GM12878 (cell line): ENCODE measurements at regions of chr16 and their contacts with region 1.

Region 1: DNA sequence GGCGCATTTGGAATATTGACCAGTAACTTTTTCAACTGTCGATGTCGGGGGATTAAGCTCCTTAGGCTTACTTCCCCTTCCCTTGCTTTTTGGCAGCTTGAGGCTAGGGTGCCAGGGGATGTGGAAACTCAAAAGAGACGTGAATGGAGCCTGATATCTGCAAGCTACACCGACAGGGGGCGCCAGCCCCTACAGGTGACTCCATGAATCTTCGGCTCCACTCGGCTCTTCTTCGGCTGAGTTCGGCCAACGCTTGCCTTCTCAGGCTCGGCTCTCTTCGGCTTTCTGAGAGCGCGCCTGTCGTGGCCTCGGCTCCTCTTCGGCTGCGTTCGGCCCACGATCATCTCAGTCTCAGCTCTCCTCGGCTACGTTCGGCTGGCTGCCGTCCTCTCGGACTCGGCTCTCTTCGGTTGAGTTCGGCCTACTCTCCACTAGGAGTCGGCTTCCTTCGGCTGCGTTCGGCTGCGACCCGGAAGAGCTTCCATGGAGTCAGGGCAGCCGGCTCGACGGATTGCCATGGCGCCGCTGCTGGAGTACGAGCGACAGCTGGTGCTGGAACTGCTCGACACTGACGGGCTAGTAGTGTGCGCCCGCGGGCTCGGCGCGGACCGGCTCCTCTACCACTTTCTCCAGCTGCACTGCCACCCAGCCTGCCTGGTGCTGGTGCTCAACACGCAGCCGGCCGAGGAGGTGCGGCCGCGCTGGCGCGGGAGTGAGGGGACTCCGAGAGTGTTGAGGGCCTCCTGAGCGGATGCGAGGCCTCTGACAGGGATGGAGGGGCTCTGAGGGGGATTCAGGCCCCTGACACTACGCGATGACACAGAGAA is at the start of gene ERCC4:
- DNase-seq: peak; percentile 96
- ATAC-seq: peak; percentile 99
- H3K4me3 ChIP-seq: peak within 1 kb of the TSS; percentile 87
- H3K27ac ChIP-seq: peak within 1 kb of the TSS; percentile 54
- H3K4me1 ChIP-seq: no peaks in the 10 kb centered on the region
- H3K27me3 ChIP-seq: no peaks in the 10 kb centered on the region
- CTCF ChIP-seq: peak; percentile 89 to 97 (median 96)
- EP300 ChIP-seq: no peak
- POLR2A ChIP-seq: peak; percentile 97
- RAD21 ChIP-seq: peak; percentile 41; the same call in 1 of the 2 replicates
- polyA plus RNA-seq, gene ERCC4: 5.7 to 15.6 TPM

Region 2: GRCh38 chr16:13665876-13666275 is 254.0 kb before region 1 on chr16:
- CTCF ChIA-PET with region 1: no interaction called
- POLR2A ChIA-PET with region 1: no interaction called
- RAD21 ChIA-PET with region 1: no interaction called
- SMC1A ChIA-PET with region 1: no interaction called
- in situ Hi-C with region 1: no loop called
- intact Hi-C with region 1: no loop called
- DNase-seq: no peak
- ATAC-seq: no peak
- H3K4me3 ChIP-seq: no peak overlapping the region
- H3K27ac ChIP-seq: no peak overlapping the region
- H3K4me1 ChIP-seq: no peaks in the 10 kb centered on the region
- H3K27me3 ChIP-seq: no peaks in the 10 kb centered on the region
- CTCF ChIP-seq: no peak
- EP300 ChIP-seq: no peak
- POLR2A ChIP-seq: no peak
- RAD21 ChIP-seq: no peak

Region 3: GRCh38 chr16:13873835-13874438 is 46.0 kb before region 1 on chr16:
- CTCF ChIA-PET with region 1: interaction called, 10 read pairs
- POLR2A ChIA-PET with region 1: no interaction called
- RAD21 ChIA-PET with region 1: interaction called, 3 read pairs
- SMC1A ChIA-PET with region 1: interaction called, 4 read pairs
- in situ Hi-C with region 1: no loop called
- intact Hi-C with region 1: no loop called
- DNase-seq: no peak
- ATAC-seq: no peak
- H3K4me3 ChIP-seq: no peak overlapping the region
- H3K27ac ChIP-seq: no peak overlapping the region
- H3K4me1 ChIP-seq: no peaks in the 10 kb centered on the region
- H3K27me3 ChIP-seq: 0 out of 4 replicates have a peak, but pooled peaks cover 0 to 2% of the 10 kb centered on the region in 2 experiments
- CTCF ChIP-seq: peak; percentile 27 to 46 (median 32); a peak in 4 of 6 replicates
- EP300 ChIP-seq: no peak
- POLR2A ChIP-seq: no peak
- RAD21 ChIP-seq: peak; percentile 58

Region 4: GRCh38 chr16:13951611-13952010 is 31.7 kb after region 1 on chr16:
- CTCF ChIA-PET with region 1: interaction called, 17 read pairs
- POLR2A ChIA-PET with region 1: no interaction called
- RAD21 ChIA-PET with region 1: interaction called, 6 read pairs
- SMC1A ChIA-PET with region 1: interaction called, 8 read pairs
- in situ Hi-C with region 1: no loop called
- intact Hi-C with region 1: loop called (anchors 5 kb)
- DNase-seq: no peak
- ATAC-seq: no peak
- H3K4me3 ChIP-seq: no peak overlapping the region
- H3K27ac ChIP-seq: no peak overlapping the region
- H3K4me1 ChIP-seq: peaks cover 15% of the 10 kb centered on the region
- H3K27me3 ChIP-seq: no peaks in the 10 kb centered on the region
- CTCF ChIP-seq: no peak
- EP300 ChIP-seq: no peak
- POLR2A ChIP-seq: no peak
- RAD21 ChIP-seq: no peak

Region 5: GRCh38 chr16:14007450-14007849 is 87.6 kb after region 1 on chr16:
- CTCF ChIA-PET with region 1: interaction called, 8 read pairs
- POLR2A ChIA-PET with region 1: no interaction called
- RAD21 ChIA-PET with region 1: no interaction called
- SMC1A ChIA-PET with region 1: interaction called, 3 read pairs
- in situ Hi-C with region 1: no loop called
- intact Hi-C with region 1: loop called (anchors 5 kb)
- DNase-seq: peak; percentile 62
- ATAC-seq: peak; percentile 87
- H3K4me3 ChIP-seq: no peak overlapping the region
- H3K27ac ChIP-seq: no peak overlapping the region
- H3K4me1 ChIP-seq: peaks cover 14% of the 10 kb centered on the region
- H3K27me3 ChIP-seq: no peaks in the 10 kb centered on the region
- CTCF ChIP-seq: no peak
- EP300 ChIP-seq: no peak
- POLR2A ChIP-seq: no peak
- RAD21 ChIP-seq: no peak

Region 6: DNA sequence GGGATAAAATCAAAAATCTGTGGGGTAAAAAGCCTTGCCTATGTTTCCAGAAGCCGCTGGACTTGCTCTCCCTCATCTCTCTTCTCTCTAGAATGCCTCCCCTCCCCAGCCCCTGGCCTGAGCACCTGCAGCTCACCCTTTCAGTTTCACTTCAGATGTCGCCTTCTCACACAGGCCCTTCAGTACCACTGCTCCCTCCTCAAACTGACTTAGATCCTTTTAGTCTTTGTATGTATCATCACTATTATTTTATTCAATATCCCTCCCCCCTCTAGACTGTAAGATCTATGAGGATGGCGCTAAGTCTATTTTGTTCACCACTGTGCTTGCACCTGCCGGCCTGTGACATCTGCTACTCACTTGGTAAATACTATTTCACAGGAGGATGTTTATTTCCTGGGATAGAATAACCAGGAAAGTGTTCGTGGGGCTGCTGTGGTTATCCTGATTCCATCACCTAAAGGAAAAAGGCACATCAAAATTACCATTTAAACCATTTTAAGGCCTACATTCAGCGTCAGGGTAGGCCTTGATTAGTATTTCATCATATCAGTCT is 273.5 kb after region 1 on chr16:
- CTCF ChIA-PET with region 1: interaction called, 8 read pairs
- POLR2A ChIA-PET with region 1: no interaction called
- RAD21 ChIA-PET with region 1: interaction called, 6 read pairs
- SMC1A ChIA-PET with region 1: interaction called, 9 read pairs
- in situ Hi-C with region 1: no loop called
- intact Hi-C with region 1: loop called (anchors 5 kb)
- DNase-seq: peak; percentile 21
- ATAC-seq: peak; percentile 98
- H3K4me3 ChIP-seq: peak overlapping the region; percentile 16
- H3K27ac ChIP-seq: peak overlapping the region; percentile 74
- H3K4me1 ChIP-seq: peaks cover 19% of the 10 kb centered on the region
- H3K27me3 ChIP-seq: no peaks in the 10 kb centered on the region
- CTCF ChIP-seq: no peak
- EP300 ChIP-seq: no peak
- POLR2A ChIP-seq: peak; percentile 43; the same call in 1 of the 2 replicates
- RAD21 ChIP-seq: no peak

Region 7: DNA sequence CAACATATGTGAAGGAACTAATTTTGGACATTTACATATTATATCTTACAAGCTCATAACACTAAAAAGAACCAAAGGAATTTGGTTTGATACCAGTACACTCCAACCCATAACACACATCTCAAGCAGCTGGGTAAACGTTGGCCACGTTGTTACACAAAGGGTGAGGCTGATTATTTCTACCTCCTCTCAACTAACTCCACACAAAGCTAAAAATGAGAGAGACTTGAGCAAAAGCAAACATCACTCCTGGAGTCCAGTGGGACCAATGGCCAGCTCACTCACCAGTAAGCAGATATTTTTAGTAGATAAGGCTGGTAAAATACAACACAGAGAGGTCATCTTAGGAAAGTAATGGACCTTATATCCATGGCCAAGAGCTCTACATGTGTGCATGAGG is 358.9 kb after region 1 on chr16:
- CTCF ChIA-PET with region 1: interaction called, 31 read pairs
- POLR2A ChIA-PET with region 1: no interaction called
- RAD21 ChIA-PET with region 1: no interaction called
- SMC1A ChIA-PET with region 1: interaction called, 7 read pairs
- in situ Hi-C with region 1: no loop called
- intact Hi-C with region 1: no loop called
- DNase-seq: no peak
- ATAC-seq: no peak
- H3K4me3 ChIP-seq: no peak overlapping the region
- H3K27ac ChIP-seq: no peak overlapping the region
- H3K4me1 ChIP-seq: no peaks in the 10 kb centered on the region
- H3K27me3 ChIP-seq: no peaks in the 10 kb centered on the region
- CTCF ChIP-seq: no peak
- EP300 ChIP-seq: no peak
- POLR2A ChIP-seq: no peak
- RAD21 ChIP-seq: no peak

Region 8: DNA sequence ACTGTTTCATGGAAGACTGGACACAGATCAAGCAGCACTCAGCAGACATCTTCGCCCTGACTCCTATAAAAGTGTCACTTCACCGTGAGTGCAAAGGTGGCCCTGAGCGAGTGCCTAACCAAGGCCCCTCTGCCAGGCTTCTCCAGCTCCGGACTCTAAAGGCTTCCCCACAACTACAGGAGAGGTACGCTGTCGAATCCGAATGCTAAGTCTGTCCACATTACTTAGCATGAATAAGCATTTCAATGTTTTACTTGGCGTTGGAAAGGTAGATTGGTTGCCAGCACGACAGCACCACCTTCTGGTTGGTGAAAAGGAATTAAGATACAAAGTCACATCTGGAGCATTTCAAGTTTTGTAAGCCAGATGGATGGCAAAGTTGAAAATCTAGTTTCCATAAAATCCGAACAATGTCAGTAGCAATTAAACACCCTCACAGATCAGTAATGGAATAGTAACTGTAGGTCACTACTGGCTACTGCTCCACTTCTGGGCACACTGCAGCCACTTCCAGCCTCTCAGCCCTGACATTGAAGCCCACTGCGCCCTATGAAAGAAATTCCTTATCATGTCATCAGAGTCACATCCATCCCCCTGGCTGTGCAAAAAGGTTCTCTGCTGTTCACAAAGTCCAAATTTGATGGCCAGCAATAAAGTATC is 609.2 kb after region 1 on chr16:
- CTCF ChIA-PET with region 1: interaction called, 8 read pairs
- POLR2A ChIA-PET with region 1: no interaction called
- RAD21 ChIA-PET with region 1: interaction called, 3 read pairs
- SMC1A ChIA-PET with region 1: interaction called, 6 read pairs
- in situ Hi-C with region 1: loop called (anchors 5 kb)
- intact Hi-C with region 1: loop called (anchors 2 kb)
- DNase-seq: peak; percentile 81
- ATAC-seq: peak; percentile 91
- H3K4me3 ChIP-seq: no peak overlapping the region
- H3K27ac ChIP-seq: peak overlapping the region; percentile 45
- H3K4me1 ChIP-seq: peaks cover 9% of the 10 kb centered on the region; the same call in 1 of the 2 replicates
- H3K27me3 ChIP-seq: no peaks in the 10 kb centered on the region
- CTCF ChIP-seq: peak; percentile 66 to 94 (median 70); a peak in 5 of 6 replicates
- EP300 ChIP-seq: no peak
- POLR2A ChIP-seq: no peak
- RAD21 ChIP-seq: peak; percentile 99

Region 9: GRCh38 chr16:14650629-14651028 is 730.7 kb after region 1 on chr16:
- CTCF ChIA-PET with region 1: no interaction called
- POLR2A ChIA-PET with region 1: no interaction called
- RAD21 ChIA-PET with region 1: no interaction called
- SMC1A ChIA-PET with region 1: no interaction called
- in situ Hi-C with region 1: no loop called
- intact Hi-C with region 1: no loop called
- DNase-seq: no peak
- ATAC-seq: no peak
- H3K4me3 ChIP-seq: no peak overlapping the region
- H3K27ac ChIP-seq: no peak overlapping the region
- H3K4me1 ChIP-seq: no peaks in the 10 kb centered on the region
- H3K27me3 ChIP-seq: no peaks in the 10 kb centered on the region
- CTCF ChIP-seq: no peak
- EP300 ChIP-seq: no peak
- POLR2A ChIP-seq: no peak
- RAD21 ChIP-seq: no peak